ENCODE measurements at regions of chr12 and their contacts with region 1.

Region 1: GRCh38 chr12:68831272-68831671 is 23.3 kb downstream of the MDM2 start:
- DNase-seq: no peak
- CTCF ChIP-seq: no peak

Region 2: DNA sequence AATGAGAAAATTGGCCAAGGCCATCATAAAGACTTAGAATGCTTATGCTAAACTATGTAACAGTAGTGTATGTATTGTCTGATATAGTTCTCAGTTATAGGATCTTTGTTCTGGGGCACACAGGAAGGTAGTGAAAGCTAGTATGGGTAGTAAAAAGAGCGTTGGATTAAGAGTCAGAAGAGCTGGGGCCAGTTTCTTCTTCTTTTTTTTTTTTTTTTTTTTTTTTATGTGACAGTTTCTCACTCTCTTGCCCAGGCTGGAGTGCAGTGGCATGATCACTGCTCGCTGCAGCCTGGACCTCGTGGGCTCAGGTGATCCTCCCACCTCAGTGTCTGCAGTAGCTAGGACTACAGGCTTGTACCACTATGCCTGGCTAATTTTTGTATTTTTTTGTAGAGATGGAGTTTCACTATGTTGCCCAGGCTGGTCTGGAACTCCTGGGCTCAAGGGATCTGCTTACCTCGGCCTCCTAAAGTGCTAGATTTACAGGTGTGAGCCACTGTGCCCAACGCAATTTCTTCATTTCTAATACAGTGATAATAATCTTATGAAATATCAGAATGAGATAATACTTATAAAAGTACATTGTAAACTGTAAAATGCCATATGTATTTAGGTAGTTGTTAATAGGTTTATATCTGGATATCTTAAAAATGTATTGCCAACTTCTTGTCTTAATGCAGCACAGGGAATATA is 15.9 kb before region 1 on chr12:
- CTCF ChIA-PET with region 1: interaction called, 81 read pairs
- POLR2A ChIA-PET with region 1: interaction called, 8 read pairs
- DNase-seq: no peak
- CTCF ChIP-seq: no peak

Region 3: GRCh38 chr12:68844788-68845695 is 13.8 kb after region 1 on chr12:
- CTCF ChIA-PET with region 1: interaction called, 51 read pairs
- POLR2A ChIA-PET with region 1: interaction called, 3 read pairs
- DNase-seq: no peak
- CTCF ChIP-seq: no peak